Endothelial cell of umbilical vein (primary cell): ENCODE measurements at regions of chr18 and their contacts with region 1.

Region 1: GRCh38 chr18:67515945-67516538 is 478 bp downstream of the DSEL start:
- DNase-seq: peak; percentile 84
- H3K4me3 ChIP-seq: peak overlapping the region; percentile 82 to 96 (median 94)
- H3K27ac ChIP-seq: peak overlapping the region; percentile 79
- H3K4me1 ChIP-seq: peaks cover 8% of the 10 kb centered on the region
- H3K27me3 ChIP-seq: no peaks in the 10 kb centered on the region
- CTCF ChIP-seq: peak; percentile 61 to 84
- POLR2A ChIP-seq: no peak

Region 2: DNA sequence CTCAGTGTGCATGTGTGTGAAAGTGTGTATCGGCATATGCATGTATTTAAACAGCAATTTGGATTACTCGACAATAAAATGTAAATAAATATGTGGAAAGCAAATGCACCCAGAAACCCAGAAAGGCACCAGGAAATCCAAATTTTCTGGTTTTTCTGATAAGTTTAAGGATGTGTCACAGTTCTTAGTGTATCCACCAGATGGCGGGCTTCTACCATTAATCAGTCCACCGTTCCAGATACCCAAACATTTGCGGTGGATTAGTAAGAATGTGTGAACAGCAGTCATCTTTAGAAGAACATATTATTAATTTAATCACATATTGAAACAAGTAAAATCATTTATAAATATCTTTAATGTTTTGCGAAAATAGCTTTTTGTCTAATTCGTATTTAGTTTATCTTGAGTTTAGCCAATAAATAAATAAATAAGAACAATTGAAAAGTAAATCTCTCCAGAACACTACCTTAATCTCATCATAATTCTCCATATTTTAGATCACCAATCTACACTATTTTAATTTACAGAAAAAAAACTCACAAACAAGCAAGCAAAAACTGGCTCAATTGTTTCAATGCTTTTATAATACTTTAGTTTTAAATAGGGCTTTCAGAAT is 298.4 kb before region 1 on chr18:
- CTCF ChIA-PET with region 1: interaction called, 7 read pairs
- POLR2A ChIA-PET with region 1: no interaction called
- dilution Hi-C with region 1: no loop called
- intact Hi-C with region 1: loop called (anchors 1 kb)
- DNase-seq: peak; percentile 70
- H3K4me3 ChIP-seq: no peak overlapping the region
- H3K27ac ChIP-seq: no peak overlapping the region
- H3K4me1 ChIP-seq: no peaks in the 10 kb centered on the region
- H3K27me3 ChIP-seq: no peaks in the 10 kb centered on the region
- CTCF ChIP-seq: peak; percentile 41 to 47
- POLR2A ChIP-seq: no peak

Region 3: GRCh38 chr18:67599277-67599676 is 83.2 kb after region 1 on chr18:
- CTCF ChIA-PET with region 1: interaction called, 4 read pairs
- POLR2A ChIA-PET with region 1: no interaction called
- dilution Hi-C with region 1: no loop called
- intact Hi-C with region 1: loop called (anchors 5 kb)
- DNase-seq: peak; percentile 36
- H3K4me3 ChIP-seq: no peak overlapping the region
- H3K27ac ChIP-seq: no peak overlapping the region
- H3K4me1 ChIP-seq: peaks cover 7% of the 10 kb centered on the region
- H3K27me3 ChIP-seq: no peaks in the 10 kb centered on the region
- CTCF ChIP-seq: no peak
- POLR2A ChIP-seq: no peak

Region 4: DNA sequence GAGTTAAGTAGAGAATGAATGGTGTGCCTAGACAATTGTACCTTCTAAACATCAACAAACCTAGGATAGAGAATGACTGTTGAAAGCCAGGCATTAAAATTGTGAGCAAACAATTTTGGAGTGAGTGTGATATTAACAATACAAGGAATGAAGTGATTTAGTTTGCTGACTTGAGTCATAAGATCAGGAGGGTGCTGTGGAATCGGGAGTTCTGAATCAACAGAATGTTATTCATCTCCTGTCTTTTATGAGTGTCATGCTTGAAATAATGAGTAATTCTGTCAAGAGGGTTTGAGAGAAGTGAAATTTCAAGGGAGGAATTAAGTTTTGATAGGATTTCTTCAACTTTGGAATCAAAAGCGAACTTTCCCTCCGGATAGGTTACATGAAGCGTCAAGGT is 214.8 kb after region 1 on chr18:
- CTCF ChIA-PET with region 1: no interaction called
- POLR2A ChIA-PET with region 1: no interaction called
- dilution Hi-C with region 1: no loop called
- intact Hi-C with region 1: loop called (anchors 5 kb)
- DNase-seq: peak; percentile 75
- H3K4me3 ChIP-seq: no peak overlapping the region
- H3K27ac ChIP-seq: peak overlapping the region; percentile 15
- H3K4me1 ChIP-seq: peaks cover 20% of the 10 kb centered on the region
- H3K27me3 ChIP-seq: no peaks in the 10 kb centered on the region
- CTCF ChIP-seq: no peak
- POLR2A ChIP-seq: no peak

Region 5: GRCh38 chr18:68623342-68623741 is 1107.3 kb after region 1 on chr18:
- CTCF ChIA-PET with region 1: interaction called, 10 read pairs
- POLR2A ChIA-PET with region 1: no interaction called
- dilution Hi-C with region 1: no loop called
- intact Hi-C with region 1: loop called (anchors 1 kb)
- DNase-seq: peak; percentile 72
- H3K4me3 ChIP-seq: no peak overlapping the region
- H3K27ac ChIP-seq: no peak overlapping the region
- H3K4me1 ChIP-seq: no peaks in the 10 kb centered on the region
- H3K27me3 ChIP-seq: no peaks in the 10 kb centered on the region
- CTCF ChIP-seq: peak; percentile 62 to 70
- POLR2A ChIP-seq: no peak

Region 6: DNA sequence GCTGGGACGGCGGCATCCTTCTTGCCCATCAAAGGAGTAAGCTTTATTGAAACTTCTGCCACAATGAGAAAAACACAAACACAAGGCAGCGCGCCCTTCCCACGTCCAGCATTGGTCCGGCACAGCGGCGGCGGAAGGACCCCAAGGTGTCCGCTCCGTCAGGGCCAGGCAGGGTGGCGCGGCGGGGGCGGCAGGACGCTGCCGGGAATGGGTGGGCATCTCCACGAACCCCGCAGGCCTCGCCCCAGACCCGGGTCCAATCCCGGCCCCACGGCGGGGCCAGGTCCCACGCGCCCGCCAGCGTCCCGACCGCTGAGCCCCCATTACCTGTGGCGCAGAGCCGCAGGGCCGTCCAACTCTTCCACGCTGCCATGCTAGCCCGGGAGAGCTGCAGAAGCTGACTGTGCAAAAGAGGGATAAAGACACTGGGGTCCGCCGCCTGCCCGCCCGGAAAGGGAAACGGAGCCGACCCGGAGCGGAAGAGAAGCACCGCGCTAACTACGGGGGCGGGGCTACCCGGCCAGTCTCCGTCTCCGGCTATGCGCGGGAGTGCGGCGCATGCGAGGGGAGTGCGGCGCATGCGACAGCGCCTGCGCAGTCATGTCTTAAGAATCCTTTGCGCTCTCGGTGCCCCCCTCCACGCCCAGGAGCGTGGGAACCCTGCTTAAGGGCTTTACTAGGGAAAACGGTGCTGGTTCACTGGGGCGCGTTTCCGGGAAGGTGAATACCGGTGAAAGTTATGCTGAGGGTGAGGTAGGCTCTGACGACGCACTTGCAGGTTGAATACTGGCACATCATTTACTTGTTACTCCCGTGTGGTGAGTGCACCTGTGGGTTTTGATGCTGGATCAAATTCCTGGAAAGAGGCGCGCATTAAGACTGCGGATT is 1198.8 kb after region 1 on chr18 and contains the start of gene TMX3:
- CTCF ChIA-PET with region 1: interaction called, 3 read pairs
- POLR2A ChIA-PET with region 1: no interaction called
- dilution Hi-C with region 1: no loop called
- intact Hi-C with region 1: loop called (anchors 2 kb)
- DNase-seq: peak; percentile 96
- H3K4me3 ChIP-seq: peak within 1 kb of the TSS; percentile 60 to 90 (median 80)
- H3K27ac ChIP-seq: peak within 1 kb of the TSS; percentile 47
- H3K4me1 ChIP-seq: peaks cover 16% of the 10 kb centered on the region
- H3K27me3 ChIP-seq: no peaks in the 10 kb centered on the region
- CTCF ChIP-seq: no peak
- POLR2A ChIP-seq: peak; percentile 77
- total RNA-seq, gene TMX3: 65.5 and 69.7 TPM in 2 replicates